A673 (cell line): ENCODE measurements at regions of chr11 and their contacts with region 1.

Region 1: GRCh38 chr11:3037040-3037944 is 19.9 kb downstream of the CARS1 start:
- DNase-seq: peak; percentile 77
- H3K4me3 ChIP-seq: no peak overlapping the region
- H3K27ac ChIP-seq: no peak overlapping the region
- H3K4me1 ChIP-seq: no peaks in the 10 kb centered on the region
- H3K27me3 ChIP-seq: no peaks in the 10 kb centered on the region
- CTCF ChIP-seq: peak; percentile 78

Region 2: DNA sequence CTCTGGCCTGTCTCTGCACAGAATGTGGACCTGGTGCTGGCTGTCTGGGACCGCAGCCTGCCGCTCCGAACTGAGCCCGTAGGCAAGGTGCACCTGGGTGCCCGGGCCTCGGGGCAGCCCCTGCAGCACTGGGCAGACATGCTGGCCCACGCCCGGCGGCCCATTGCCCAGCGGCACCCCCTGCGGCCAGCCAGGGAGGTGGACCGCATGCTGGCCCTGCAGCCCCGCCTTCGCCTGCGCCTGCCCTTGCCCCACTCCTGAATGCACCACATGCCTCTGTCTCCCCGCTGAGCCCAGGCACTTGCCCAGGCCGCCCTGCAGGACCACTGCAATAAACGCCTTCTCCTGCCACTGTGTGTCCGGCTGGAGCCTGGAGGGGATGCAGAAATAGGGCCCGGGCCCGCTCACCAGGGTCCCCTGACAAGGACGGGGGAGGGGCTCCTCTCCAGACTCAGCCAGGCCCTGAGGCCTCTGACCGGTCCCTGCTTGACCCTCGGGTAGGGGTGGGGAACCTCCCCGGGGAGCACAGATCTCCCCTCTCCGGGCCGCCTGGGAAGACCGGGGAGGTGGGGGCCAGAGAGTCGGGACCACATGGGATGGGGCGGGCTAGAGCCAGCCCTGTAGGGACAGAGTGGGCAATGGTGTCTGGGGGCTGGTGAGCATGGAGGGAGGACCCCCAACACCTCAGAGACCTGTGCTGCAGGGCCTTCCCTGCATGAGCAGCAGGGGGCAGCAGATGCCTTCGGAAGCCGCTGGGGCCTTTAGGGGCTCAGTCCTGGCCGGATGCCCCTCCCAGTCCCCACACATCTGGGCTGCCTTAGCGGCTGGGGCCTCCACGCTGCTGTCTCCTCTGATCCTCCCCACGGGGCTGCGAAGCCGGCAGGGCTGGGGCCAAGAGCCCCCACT is 1199.9 kb before region 1 on chr11:
- CTCF ChIA-PET with region 1: no interaction called
- POLR2A ChIA-PET with region 1: no interaction called
- intact Hi-C with region 1: no loop called
- DNase-seq: peak; percentile 50
- H3K4me3 ChIP-seq: no peak overlapping the region
- H3K27ac ChIP-seq: no peak overlapping the region
- H3K4me1 ChIP-seq: no peaks in the 10 kb centered on the region
- H3K27me3 ChIP-seq: no peaks in the 10 kb centered on the region
- CTCF ChIP-seq: peak; percentile 67

Region 3: GRCh38 chr11:2846056-2846455 is 191.2 kb before region 1 on chr11:
- CTCF ChIA-PET with region 1: no interaction called
- POLR2A ChIA-PET with region 1: no interaction called
- intact Hi-C with region 1: no loop called
- DNase-seq: no peak
- H3K4me3 ChIP-seq: no peak overlapping the region
- H3K27ac ChIP-seq: no peak overlapping the region
- H3K4me1 ChIP-seq: no peaks in the 10 kb centered on the region
- H3K27me3 ChIP-seq: no peaks in the 10 kb centered on the region
- CTCF ChIP-seq: no peak

Region 4: GRCh38 chr11:2870460-2870859 is 166.8 kb before region 1 on chr11:
- CTCF ChIA-PET with region 1: no interaction called
- POLR2A ChIA-PET with region 1: no interaction called
- intact Hi-C with region 1: no loop called
- DNase-seq: no peak
- H3K4me3 ChIP-seq: no peak overlapping the region
- H3K27ac ChIP-seq: no peak overlapping the region
- H3K4me1 ChIP-seq: no peaks in the 10 kb centered on the region
- H3K27me3 ChIP-seq: peaks cover 13% of the 10 kb centered on the region
- CTCF ChIP-seq: no peak

Region 5: GRCh38 chr11:3051196-3052108 is 14.2 kb after region 1 on chr11:
- CTCF ChIA-PET with region 1: interaction called, 13 read pairs
- POLR2A ChIA-PET with region 1: no interaction called
- intact Hi-C with region 1: no loop called
- DNase-seq: peak; percentile 72
- H3K4me3 ChIP-seq: no peak overlapping the region
- H3K27ac ChIP-seq: peak overlapping the region; percentile 75
- H3K4me1 ChIP-seq: peaks cover 44% of the 10 kb centered on the region
- H3K27me3 ChIP-seq: no peaks in the 10 kb centered on the region
- CTCF ChIP-seq: 0 out of 2 replicates have a peak, but pooled peaks have one; percentile 21

Region 6: GRCh38 chr11:3091791-3092602 is 54.7 kb after region 1 on chr11:
- CTCF ChIA-PET with region 1: interaction called, 29 read pairs
- POLR2A ChIA-PET with region 1: no interaction called
- intact Hi-C with region 1: loop called (anchors 1 kb)
- DNase-seq: peak; percentile 71
- H3K4me3 ChIP-seq: no peak overlapping the region
- H3K27ac ChIP-seq: no peak overlapping the region
- H3K4me1 ChIP-seq: no peaks in the 10 kb centered on the region
- H3K27me3 ChIP-seq: no peaks in the 10 kb centered on the region
- CTCF ChIP-seq: peak; percentile 95

Region 7: GRCh38 chr11:3217676-3218482 is 180.6 kb after region 1 on chr11:
- CTCF ChIA-PET with region 1: no interaction called
- POLR2A ChIA-PET with region 1: no interaction called
- intact Hi-C with region 1: loop called (anchors 1 kb)
- DNase-seq: no peak
- H3K4me3 ChIP-seq: no peak overlapping the region
- H3K27ac ChIP-seq: no peak overlapping the region
- H3K4me1 ChIP-seq: no peaks in the 10 kb centered on the region
- H3K27me3 ChIP-seq: no peaks in the 10 kb centered on the region
- CTCF ChIP-seq: no peak

Region 8: DNA sequence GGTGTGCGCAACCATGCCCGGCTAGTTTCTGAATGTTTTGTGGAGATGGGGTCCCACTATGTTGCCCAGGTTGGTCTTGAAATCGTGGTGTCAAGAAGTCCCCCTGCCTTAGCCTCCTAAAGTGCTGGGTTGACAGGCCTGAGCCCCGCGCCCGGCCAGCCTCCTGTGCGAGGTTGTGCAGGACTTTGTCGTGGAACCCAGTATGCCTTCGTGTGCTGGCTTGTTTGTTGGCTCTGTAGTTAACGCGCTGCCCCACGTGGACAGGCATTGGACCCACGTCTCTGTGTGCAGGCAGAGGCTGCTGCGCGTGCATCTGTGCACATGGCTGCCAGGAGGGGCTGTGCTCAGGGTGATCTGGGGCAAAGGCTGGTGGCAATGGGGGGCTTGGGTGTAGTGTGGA is 375.5 kb after region 1 on chr11:
- CTCF ChIA-PET with region 1: no interaction called
- POLR2A ChIA-PET with region 1: no interaction called
- intact Hi-C with region 1: loop called (anchors 10 kb)
- DNase-seq: no peak
- H3K4me3 ChIP-seq: no peak overlapping the region
- H3K27ac ChIP-seq: no peak overlapping the region
- H3K4me1 ChIP-seq: no peaks in the 10 kb centered on the region
- H3K27me3 ChIP-seq: no peaks in the 10 kb centered on the region
- CTCF ChIP-seq: no peak